ENCODE measurements at regions of chr9 and their contacts with region 1.

Region 1: GRCh38 chr9:85414390-85414789 is 327.4 kb downstream of the AGTPBP1 start:
- DNase-seq: no peak
- ATAC-seq: no peak
- H3K4me3 ChIP-seq: no peak overlapping the region
- H3K27ac ChIP-seq: no peak overlapping the region
- H3K4me1 ChIP-seq: no peaks in the 10 kb centered on the region
- CTCF ChIP-seq: no peak
- EP300 ChIP-seq: no peak
- POLR2A ChIP-seq: no peak
- RAD21 ChIP-seq: no peak

Region 2: DNA sequence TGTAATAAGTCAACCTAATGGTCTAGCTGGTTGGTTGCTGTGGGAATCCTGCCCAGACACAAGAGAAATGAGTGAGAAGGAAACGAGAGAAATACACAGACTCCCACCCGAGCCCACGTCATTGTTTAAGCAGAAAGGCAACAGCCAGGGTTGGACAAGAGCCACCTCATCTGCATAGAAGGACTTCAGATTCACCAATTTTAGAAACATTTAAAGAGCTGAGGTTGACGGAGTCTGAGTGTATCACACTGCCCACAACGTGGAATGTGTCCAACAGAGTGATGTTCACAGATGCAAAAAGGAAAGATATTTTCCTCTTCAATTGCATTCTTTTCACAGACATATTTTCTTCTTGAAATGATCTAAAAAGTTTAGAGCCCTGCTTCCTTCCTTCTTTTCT is 22.1 kb before region 1 on chr9:
- CTCF ChIA-PET with region 1: no interaction called
- POLR2A ChIA-PET with region 1: no interaction called
- DNase-seq: no peak
- ATAC-seq: no peak
- H3K4me3 ChIP-seq: no peak overlapping the region
- H3K27ac ChIP-seq: no peak overlapping the region
- H3K4me1 ChIP-seq: no peaks in the 10 kb centered on the region
- CTCF ChIP-seq: no peak
- EP300 ChIP-seq: no peak
- POLR2A ChIP-seq: no peak
- RAD21 ChIP-seq: no peak

Region 3: DNA sequence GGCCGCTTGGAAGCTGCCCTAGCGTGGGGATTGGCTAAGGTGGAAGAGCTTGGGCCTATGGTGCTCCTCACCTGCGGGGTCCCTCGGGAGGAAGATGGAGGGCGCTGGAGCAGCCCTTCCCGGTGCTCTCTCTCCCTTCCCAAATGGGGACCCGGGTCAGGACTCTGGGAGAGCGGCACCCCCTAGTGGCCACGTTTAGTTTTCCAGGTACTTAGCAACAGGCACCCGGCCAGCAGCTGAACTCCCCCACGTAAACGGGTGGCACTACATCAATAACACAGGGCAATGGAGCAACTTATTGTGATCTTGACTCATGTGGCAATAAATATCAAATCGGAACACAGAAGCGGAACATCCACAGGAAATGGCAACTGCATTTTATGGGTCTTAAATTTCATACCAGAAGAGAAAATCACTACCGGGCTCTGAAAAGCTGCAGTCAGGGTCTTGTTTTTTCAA is 10.8 kb after region 1 on chr9:
- CTCF ChIA-PET with region 1: interaction called, 14 read pairs
- POLR2A ChIA-PET with region 1: no interaction called
- DNase-seq: peak; percentile 62 to 69
- ATAC-seq: peak; percentile 83 to 92
- H3K4me3 ChIP-seq: no peak overlapping the region
- H3K27ac ChIP-seq: no peak overlapping the region
- H3K4me1 ChIP-seq: no peaks in the 10 kb centered on the region
- CTCF ChIP-seq: peak; percentile 52
- EP300 ChIP-seq: no peak
- POLR2A ChIP-seq: no peak
- RAD21 ChIP-seq: peak; percentile 72 to 82

Measured in A549 (cell line).